ENCODE measurements at regions of chr12 and their contacts with region 1.

Region 1: DNA sequence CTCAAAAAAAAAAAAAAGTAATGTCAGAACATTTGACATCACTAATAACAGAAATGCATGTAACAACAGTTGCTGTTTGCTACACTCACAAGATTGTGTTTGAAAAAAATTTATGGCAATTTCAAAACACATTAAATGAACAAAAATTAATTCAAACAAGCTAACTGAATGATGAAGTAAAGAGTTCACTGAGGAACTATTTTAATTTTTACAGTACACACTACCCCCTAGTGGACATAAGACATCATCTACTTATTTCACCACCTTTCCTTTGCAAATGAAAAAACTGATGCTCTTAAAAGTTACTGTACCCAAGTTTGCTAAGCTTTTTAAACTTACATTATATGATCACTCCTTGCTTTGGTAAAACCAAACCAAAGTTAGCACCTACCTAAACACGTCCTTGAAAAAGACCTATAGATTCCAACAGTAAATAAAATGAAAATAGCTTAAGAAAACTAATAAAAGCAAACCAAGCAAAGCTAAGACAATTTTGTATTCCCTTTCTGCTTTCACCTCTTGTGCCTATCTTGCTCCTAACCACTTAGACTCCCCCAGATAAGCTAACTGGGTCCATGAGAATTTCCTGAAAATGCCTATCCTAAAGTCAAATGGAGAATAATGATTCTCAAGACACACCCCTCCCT is 22.2 kb downstream of the UBE2N start:
- DNase-seq: no peak
- H3K4me3 Mint-ChIP-seq: no peak overlapping the region
- H3K27ac Mint-ChIP-seq: no peak overlapping the region
- H3K4me1 Mint-ChIP-seq: peaks cover 69% of the 10 kb centered on the region
- H3K27me3 Mint-ChIP-seq: no peaks in the 10 kb centered on the region

Region 2: DNA sequence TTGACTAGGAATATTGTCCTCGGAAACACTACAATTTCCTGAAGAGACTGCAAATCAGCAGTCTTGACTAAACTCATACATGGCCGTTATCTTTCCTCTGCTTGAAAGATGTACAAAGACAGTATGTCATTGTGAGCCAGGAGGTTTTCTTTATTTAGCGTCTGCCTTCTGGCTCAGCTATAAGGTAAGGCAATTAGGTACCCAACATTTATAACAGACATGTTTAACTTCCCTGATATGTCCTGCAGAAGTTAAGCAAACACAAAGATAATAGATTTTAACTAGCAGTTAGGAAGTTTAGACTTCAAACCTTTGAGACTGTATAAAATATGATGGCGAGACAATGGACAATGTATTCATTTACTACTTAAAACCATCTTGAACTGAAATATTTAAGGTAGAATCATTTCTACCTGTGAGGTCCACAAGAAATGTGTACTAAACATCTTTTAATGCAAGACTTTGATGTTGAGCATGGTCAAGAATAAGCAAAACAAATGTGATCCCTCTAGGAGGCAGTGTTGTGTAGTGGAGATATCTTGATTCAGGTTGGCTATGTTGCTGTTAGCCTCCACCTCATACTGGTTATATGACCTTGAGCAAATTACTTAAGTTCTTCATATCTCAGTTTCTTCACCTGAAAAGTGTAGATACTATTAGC is 394.2 kb before region 1 on chr12:
- intact Hi-C with region 1: loop called (anchors 5 kb)
- DNase-seq: no peak
- H3K4me3 Mint-ChIP-seq: no peak overlapping the region
- H3K27ac Mint-ChIP-seq: no peak overlapping the region
- H3K4me1 Mint-ChIP-seq: peaks cover 2% of the 10 kb centered on the region
- H3K27me3 Mint-ChIP-seq: no peaks in the 10 kb centered on the region

Region 3: DNA sequence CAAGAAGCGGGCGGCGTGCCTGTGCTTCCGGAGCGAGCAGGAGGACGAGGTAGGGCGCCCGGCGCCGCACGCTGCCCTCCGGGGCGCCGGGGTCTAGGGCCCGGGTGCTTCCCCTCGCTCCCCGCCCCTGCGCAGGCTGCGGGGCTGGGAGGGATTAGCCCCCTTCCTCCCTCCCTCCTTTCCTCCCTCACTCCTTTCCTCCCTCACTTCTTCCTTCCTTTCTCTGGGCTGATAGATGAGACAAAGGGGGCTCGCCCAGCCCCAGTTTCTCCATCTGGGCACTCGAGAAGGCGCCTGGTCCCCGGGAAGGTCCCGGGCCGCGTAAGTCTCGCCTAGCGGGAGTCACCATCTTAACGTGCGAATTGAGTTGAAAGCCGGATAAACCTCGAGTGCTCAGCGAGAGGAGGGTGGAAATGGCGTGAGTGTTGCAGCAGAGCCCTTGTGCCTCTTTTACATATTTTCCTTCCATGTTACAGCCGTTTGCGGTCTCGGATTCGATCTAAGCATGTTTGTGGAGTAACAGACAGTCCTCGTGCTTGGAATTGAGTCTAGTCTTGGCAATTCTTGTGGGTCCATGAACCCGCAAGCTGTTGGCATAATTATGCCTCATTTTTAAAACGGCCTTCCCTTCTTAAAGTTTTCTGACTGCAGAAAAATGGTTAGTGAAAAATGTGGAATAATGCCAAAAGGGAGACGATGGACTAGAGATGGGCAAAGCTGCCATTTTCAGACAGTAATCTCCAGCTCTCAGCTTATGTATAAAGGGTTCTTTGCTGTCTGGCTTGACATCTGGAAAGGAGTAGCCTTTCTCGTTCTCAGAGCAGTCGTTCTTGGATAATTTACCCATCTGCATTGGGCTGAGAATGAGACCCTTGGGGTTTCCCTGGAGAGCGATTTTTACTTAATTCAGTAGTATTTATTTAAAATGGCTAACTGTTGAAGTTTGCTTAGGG is 40.9 kb before region 1 on chr12:
- intact Hi-C with region 1: loop called (anchors 2 kb)
- DNase-seq: peak; percentile 55
- H3K4me3 Mint-ChIP-seq: peak overlapping the region; percentile 100
- H3K27ac Mint-ChIP-seq: peak overlapping the region; percentile 100
- H3K4me1 Mint-ChIP-seq: peaks cover 40% of the 10 kb centered on the region
- H3K27me3 Mint-ChIP-seq: peaks cover 2% of the 10 kb centered on the region

Region 4: GRCh38 chr12:93407054-93407962 is 12.2 kb before region 1 on chr12:
- intact Hi-C with region 1: loop called (anchors 1 kb)
- DNase-seq: no peak
- H3K4me3 Mint-ChIP-seq: no peak overlapping the region
- H3K27ac Mint-ChIP-seq: peak overlapping the region; percentile 55
- H3K4me1 Mint-ChIP-seq: peaks cover 50% of the 10 kb centered on the region
- H3K27me3 Mint-ChIP-seq: no peaks in the 10 kb centered on the region

Region 5: DNA sequence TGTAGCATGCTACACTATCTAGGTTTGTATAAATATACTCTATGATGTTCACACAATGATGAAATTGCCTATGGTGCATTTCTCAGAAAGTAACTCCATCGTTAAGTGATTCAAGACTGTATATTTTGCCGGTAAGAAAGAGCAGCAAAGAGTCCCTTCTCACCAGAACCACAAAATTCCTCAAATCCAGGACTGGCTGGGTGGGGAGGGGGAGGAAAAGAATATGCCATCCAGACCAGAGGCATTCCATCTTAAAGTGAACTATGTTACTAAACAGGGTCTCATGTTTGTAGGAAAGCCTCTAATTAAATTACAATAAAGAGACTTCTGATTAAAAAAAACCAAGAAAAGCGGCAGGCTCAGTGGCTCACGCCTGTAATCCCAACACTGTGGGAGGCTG is 10.8 kb after region 1 on chr12:
- intact Hi-C with region 1: no loop called
- DNase-seq: no peak
- H3K4me3 Mint-ChIP-seq: no peak overlapping the region
- H3K27ac Mint-ChIP-seq: no peak overlapping the region
- H3K4me1 Mint-ChIP-seq: peaks cover 43% of the 10 kb centered on the region
- H3K27me3 Mint-ChIP-seq: no peaks in the 10 kb centered on the region

Region 6: GRCh38 chr12:93441617-93442410 is 22.3 kb after region 1 on chr12 and contains the start of gene UBE2N:
- intact Hi-C with region 1: loop called (anchors 2 kb)
- DNase-seq: peak; percentile 94
- H3K4me3 Mint-ChIP-seq: peak within 1 kb of the TSS; percentile 98
- H3K27ac Mint-ChIP-seq: peak within 1 kb of the TSS; percentile 95
- H3K4me1 Mint-ChIP-seq: peaks cover 38% of the 10 kb centered on the region
- H3K27me3 Mint-ChIP-seq: no peaks in the 10 kb centered on the region
- total RNA-seq, gene UBE2N: 258 and 261 TPM in 2 replicates